Naive thymus-derived CD4-positive, alpha-beta T cell (primary cell): ENCODE measurements at regions of chr13 and their contacts with region 1.

Region 1: DNA sequence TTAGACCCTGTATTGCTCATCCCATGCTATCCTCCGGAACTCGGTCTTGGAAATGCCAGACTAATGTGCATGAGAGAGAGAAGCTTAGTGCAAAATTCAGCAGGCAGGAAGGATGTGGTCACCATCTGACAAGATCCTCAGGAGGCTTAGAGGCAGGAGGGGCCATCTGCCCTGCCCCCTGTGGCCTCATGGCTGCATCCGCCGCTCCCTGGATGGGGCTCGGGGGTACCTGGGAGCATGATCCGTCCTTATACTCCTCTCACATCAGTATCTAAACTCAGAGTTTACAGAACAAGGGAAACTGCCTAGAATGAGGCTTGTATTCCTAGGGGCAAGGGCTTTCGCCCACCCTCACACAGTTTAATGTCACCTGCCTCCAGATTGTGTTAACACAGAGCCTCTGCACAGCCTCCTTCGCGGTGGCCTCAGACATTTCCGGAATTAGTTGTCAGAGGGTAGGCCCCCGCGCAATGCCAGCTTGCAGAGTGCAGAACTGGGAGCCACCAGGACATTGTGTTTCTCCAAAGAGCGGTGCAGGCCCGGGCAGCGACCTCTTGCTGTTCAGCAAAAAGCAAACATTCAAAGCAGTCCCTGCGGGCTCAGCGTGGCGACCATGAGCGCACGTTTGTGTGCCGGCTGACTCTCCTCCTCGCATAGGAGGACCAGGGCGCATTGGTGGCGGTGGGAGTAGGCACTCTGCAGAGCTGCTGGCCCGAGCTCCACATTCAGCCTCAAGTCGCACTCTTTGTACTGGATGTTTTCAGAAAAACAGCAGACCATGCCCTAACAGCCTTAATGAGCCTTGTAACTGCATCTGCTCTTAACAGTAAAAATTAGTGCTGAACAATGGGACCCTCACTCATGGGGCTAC is 39.1 kb downstream of the GPR12 start:
- DNase-seq: peak in 7 of 9 donors; percentile 18 to 48 (median 42)
- ATAC-seq: peak; percentile 64
- H3K4me3 ChIP-seq: peak overlapping the region; percentile 58
- H3K4me3 Mint-ChIP-seq: peak overlapping the region; percentile 78 to 90 (median 84)
- H3K27ac ChIP-seq: peak overlapping the region; percentile 15
- H3K27ac Mint-ChIP-seq: peak overlapping the region; percentile 24 to 89 (median 77)
- H3K4me1 ChIP-seq: peaks cover 13% of the 10 kb centered on the region in 2 donors
- H3K4me1 Mint-ChIP-seq: peaks cover 15 to 33% (median 27%) of the 10 kb centered on the region in 7 donors
- H3K27me3 ChIP-seq: no peaks in the 10 kb centered on the region
- H3K27me3 Mint-ChIP-seq: peaks cover 0 to 3% (median 0%) of the 10 kb centered on the region in 5 donors

Region 2: GRCh38 chr13:25630329-25630900 is 1091.1 kb before region 1 on chr13:
- CTCF ChIA-PET with region 1: no interaction called
- POLR2A ChIA-PET with region 1: interaction called, 11 read pairs
- intact Hi-C with region 1: no loop called
- DNase-seq: no peak
- ATAC-seq: no peak
- H3K4me3 ChIP-seq: no peak overlapping the region
- H3K4me3 Mint-ChIP-seq: no peak overlapping the region
- H3K27ac ChIP-seq: no peak overlapping the region
- H3K27ac Mint-ChIP-seq: no peak overlapping the region
- H3K4me1 ChIP-seq: no peaks in the 10 kb centered on the region
- H3K4me1 Mint-ChIP-seq: no peaks in the 10 kb centered on the region
- H3K27me3 ChIP-seq: no peaks in the 10 kb centered on the region
- H3K27me3 Mint-ChIP-seq: peaks cover 5 to 27% (median 13%) of the 10 kb centered on the region in 5 donors

Region 3: GRCh38 chr13:25886438-25887214 is 834.9 kb before region 1 on chr13:
- CTCF ChIA-PET with region 1: no interaction called
- POLR2A ChIA-PET with region 1: no interaction called
- intact Hi-C with region 1: no loop called
- DNase-seq: peak in 1 of 9 donors; percentile 49
- ATAC-seq: no peak
- H3K4me3 ChIP-seq: no peak overlapping the region
- H3K4me3 Mint-ChIP-seq: peak overlapping the region in 1 of 10 donors; percentile 12
- H3K27ac ChIP-seq: no peak overlapping the region
- H3K27ac Mint-ChIP-seq: peak overlapping the region in 7 of 9 donors; percentile 1 to 86 (median 68)
- H3K4me1 ChIP-seq: peaks cover 0 to 36% of the 10 kb centered on the region in 2 donors
- H3K4me1 Mint-ChIP-seq: peaks cover 27 to 83% (median 63%) of the 10 kb centered on the region in 7 donors
- H3K27me3 ChIP-seq: no peaks in the 10 kb centered on the region
- H3K27me3 Mint-ChIP-seq: no peaks in the 10 kb centered on the region

Region 4: GRCh38 chr13:26698392-26699196 is 22.9 kb before region 1 on chr13:
- CTCF ChIA-PET with region 1: interaction called, 5 read pairs
- POLR2A ChIA-PET with region 1: no interaction called
- intact Hi-C with region 1: loop called in 1 of 2 experiments (anchors 1 kb)
- DNase-seq: peak; percentile 52 to 81 (median 79)
- ATAC-seq: peak; percentile 89
- H3K4me3 ChIP-seq: no peak overlapping the region
- H3K4me3 Mint-ChIP-seq: peak overlapping the region in 5 of 10 donors; percentile 28 to 45 (median 39)
- H3K27ac ChIP-seq: no peak overlapping the region
- H3K27ac Mint-ChIP-seq: no peak overlapping the region
- H3K4me1 ChIP-seq: no peaks in the 10 kb centered on the region
- H3K4me1 Mint-ChIP-seq: peaks cover 0 to 10% (median 5%) of the 10 kb centered on the region in 7 donors
- H3K27me3 ChIP-seq: no peaks in the 10 kb centered on the region
- H3K27me3 Mint-ChIP-seq: peaks cover 0 to 23% (median 3%) of the 10 kb centered on the region in 5 donors